ENCODE measurements at regions of chr2 and their contacts with region 1.

Region 1: DNA sequence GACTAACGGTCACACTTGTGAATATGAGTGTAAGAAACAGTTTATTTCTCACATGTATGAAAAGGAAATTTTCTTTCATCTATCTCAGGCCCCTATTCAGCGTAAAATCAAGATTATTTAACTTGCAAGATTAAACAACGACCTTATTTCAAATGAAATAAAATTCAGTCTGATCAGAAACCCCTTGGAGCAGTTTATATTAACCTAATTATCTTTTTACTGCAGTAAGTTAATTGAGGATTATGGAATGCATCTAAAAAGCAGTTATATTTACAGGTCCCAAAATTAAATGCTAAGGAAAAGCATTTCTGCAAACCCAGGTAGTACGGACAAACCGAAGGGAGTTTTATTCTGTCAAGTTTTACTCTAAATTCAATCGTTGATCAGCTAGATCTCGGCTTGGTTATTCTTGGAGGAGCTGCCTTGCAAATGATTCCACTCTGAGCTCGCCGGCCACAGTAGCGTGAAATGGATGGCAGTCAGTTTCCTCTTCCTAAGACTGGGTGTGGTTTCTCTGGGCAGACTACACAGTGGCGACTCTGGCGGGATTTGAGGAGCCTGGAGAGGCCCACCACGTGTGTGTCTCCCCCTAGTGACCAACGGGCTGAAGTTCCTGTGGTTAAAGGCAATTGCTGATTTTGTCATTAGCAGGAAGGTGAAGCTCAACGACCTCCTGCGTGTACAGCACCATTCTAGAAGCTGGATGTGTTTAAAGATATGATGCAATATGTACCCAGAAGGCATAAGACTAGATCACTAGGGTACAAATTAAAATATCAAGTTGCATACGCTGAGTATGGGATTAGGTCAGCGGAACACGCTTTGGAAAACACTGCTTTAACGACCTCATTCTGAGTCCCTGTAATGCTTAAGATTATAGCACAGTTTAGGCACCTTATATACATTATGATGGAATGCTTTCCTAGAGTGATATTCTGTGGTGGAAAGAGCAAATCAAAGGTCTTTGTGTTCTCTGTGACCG is 36.4 kb downstream of the PRKRA start:
- DNase-seq: peak; percentile 92
- ATAC-seq: peak; percentile 83
- H3K4me3 Mint-ChIP-seq: peak overlapping the region; percentile 81
- H3K27ac Mint-ChIP-seq: peak overlapping the region; percentile 95
- H3K4me1 Mint-ChIP-seq: peaks cover 9% of the 10 kb centered on the region
- H3K27me3 Mint-ChIP-seq: no peaks in the 10 kb centered on the region
- CTCF ChIP-seq: peak; percentile 88

Region 2: DNA sequence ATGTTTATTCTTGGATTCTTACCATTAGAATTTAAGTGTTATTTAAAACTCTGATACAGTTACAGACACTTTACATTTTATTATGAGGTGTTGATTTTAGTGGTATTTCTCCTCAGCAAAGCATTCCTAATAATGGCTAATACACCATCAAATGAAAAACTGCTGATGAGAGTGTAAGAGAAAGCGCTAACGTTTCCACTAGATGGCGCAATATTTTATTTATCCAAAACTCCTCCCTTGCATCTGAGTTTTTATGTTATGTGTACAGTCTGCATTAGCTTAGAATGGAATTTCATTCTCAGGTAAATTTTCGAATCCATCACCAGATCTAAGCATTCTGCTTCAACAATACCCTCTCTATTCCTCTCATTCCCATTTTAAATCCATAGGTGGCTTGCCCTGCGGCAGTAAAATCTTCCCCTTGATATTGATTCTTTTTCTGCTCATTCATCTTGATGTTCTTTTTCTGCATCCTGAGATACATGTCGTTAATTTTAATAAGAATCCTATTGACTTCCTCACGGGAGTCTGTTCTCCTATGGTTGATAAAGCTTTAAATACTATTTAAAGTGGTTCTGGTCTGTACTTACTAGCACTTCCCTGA is 17.5 kb before region 1 on chr2:
- CTCF ChIA-PET with region 1: interaction called, 154 read pairs
- POLR2A ChIA-PET with region 1: interaction called, 4 read pairs
- intact Hi-C with region 1: no loop called
- DNase-seq: peak; percentile 8
- ATAC-seq: peak; percentile 72
- H3K4me3 Mint-ChIP-seq: no peak overlapping the region
- H3K27ac Mint-ChIP-seq: no peak overlapping the region
- H3K4me1 Mint-ChIP-seq: no peaks in the 10 kb centered on the region
- H3K27me3 Mint-ChIP-seq: peaks cover 3% of the 10 kb centered on the region
- CTCF ChIP-seq: peak; percentile 83

Region 3: GRCh38 chr2:178404368-178404767 is 10.2 kb before region 1 on chr2:
- CTCF ChIA-PET with region 1: interaction called, 154 read pairs
- POLR2A ChIA-PET with region 1: interaction called, 14 read pairs
- intact Hi-C with region 1: no loop called
- DNase-seq: peak; percentile 58
- ATAC-seq: peak; percentile 86
- H3K4me3 Mint-ChIP-seq: no peak overlapping the region
- H3K27ac Mint-ChIP-seq: peak overlapping the region; percentile 55
- H3K4me1 Mint-ChIP-seq: peaks cover 9% of the 10 kb centered on the region
- H3K27me3 Mint-ChIP-seq: peaks cover 2% of the 10 kb centered on the region
- CTCF ChIP-seq: no peak

Region 4: DNA sequence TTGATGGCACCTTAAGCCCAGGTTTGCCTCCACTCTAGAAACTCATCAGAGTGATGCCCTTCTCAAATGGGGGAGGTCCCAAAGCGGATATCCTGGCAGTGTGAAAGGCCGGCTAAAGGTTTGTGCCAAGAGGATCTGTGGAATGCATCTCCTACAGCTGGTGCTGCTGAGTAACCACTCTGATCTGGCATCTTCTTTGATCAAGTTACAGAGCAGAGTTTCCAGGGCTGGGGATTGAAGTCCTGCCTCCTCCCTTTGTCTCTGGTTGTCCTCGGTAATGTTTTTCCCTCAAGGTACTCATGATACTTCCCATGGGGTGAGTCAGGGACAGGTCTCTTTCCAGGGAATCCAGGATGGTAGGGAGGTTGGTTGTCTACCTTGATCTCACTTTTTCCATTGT is 11.8 kb after region 1 on chr2:
- CTCF ChIA-PET with region 1: interaction called, 19 read pairs
- POLR2A ChIA-PET with region 1: interaction called, 7 read pairs
- intact Hi-C with region 1: no loop called
- DNase-seq: no peak
- ATAC-seq: no peak
- H3K4me3 Mint-ChIP-seq: no peak overlapping the region
- H3K27ac Mint-ChIP-seq: no peak overlapping the region
- H3K4me1 Mint-ChIP-seq: no peaks in the 10 kb centered on the region
- H3K27me3 Mint-ChIP-seq: no peaks in the 10 kb centered on the region
- CTCF ChIP-seq: no peak

Region 5: DNA sequence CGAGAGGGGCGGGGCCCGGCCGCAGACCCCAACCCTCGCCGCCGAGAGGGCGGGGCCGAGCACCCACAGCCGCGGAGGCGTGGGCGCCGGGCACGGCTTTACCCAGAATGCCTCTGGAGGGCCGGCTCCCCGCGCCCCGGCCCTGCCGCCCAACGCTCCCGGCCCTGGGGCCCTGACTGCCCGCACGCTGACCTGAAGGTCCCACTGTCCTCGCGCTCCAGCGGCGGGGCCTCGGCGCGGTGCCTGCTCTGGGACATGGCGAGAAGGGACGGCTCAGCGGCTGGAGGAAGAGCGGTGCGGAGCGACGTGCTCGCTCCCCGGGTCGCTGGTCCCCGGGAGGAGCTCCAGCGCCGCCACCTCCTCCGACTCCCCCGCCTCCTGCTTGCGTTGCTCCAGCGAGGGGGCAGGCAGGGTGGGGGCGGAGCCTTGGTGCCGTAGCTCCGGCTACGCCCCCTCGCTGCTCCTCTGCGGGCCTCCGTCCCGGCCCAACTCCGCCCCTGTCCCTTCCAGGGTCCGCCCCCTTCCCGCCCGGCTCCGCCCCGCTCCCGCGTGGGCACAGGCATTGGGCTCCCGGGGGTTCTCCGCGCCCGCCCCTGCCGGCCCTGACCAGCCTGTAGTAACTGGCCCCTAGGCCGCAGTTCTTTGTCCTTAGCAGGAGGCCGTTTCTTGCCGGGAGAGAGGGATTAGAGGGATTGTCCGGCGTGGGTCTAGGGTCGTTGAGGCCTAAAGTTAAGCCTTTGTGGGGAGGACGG is 36.4 kb after region 1 on chr2 and contains the starts of genes PJVK and PRKRA:
- CTCF ChIA-PET with region 1: interaction called, 22 read pairs
- POLR2A ChIA-PET with region 1: interaction called, 37 read pairs
- intact Hi-C with region 1: no loop called
- DNase-seq: peak; percentile 96
- ATAC-seq: peak; percentile 94
- H3K4me3 Mint-ChIP-seq: peak within 1 kb of the TSS; percentile 87
- H3K27ac Mint-ChIP-seq: peak within 1 kb of the TSS; percentile 96
- H3K4me1 Mint-ChIP-seq: peaks cover 24% of the 10 kb centered on the region
- H3K27me3 Mint-ChIP-seq: peaks cover 1% of the 10 kb centered on the region
- CTCF ChIP-seq: no peak
- total RNA-seq, gene PJVK: 3.2 to 4.6 TPM
- total RNA-seq, gene PRKRA: 74.8 to 78.0 TPM